ENCODE measurements at regions of chr11 and their contacts with region 1.

Region 1: GRCh38 chr11:107689317-107690202 is 22.3 kb downstream of the SLN start:
- DNase-seq: peak; percentile 33 to 65
- ATAC-seq: peak; percentile 64 to 85 (median 80)
- H3K4me3 ChIP-seq: no peak overlapping the region
- H3K27ac ChIP-seq: no peak overlapping the region
- H3K4me1 ChIP-seq: peaks cover 0 to 8% (median 0%) of the 10 kb centered on the region in 9 donors
- H3K27me3 ChIP-seq: peaks cover 0 to 28% (median 6%) of the 10 kb centered on the region in 7 donors
- CTCF ChIP-seq: peak; percentile 21 to 80 (median 65)

Region 2: DNA sequence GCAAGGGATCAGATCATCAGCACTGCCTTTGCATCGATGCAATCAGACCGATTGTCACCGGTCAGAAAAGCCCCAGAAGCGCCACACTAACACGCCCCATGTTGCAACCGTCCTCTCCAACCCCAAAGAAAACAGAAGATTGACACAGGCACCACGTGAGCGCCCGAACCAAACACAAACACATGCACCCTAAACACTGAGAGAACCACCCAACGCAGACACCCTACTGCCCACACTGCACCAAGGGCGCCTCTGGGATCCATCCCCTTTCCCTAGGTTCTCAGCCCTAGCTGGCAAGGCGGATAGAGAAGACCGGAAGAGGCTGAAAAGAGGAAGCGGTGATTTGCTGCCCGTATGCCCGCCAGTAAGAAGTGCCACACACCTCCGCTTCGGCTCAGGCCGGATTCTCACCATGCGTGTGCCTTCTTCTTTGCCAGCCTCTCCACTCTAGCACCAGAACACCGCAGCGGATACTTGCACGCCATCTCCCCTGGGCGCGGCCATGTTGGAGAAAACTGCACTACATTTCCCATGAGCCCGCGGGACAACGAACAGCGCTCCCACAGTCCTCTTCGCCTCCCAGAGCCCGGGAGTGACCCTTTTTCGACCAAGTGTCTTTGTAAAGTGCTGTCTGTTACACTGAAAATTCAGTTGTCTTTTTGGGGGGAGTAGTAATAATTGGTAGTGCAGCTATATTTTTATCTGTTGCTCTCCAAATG is 124.2 kb before region 1 on chr11 and contains the start of gene ALKBH8:
- intact Hi-C with region 1: loop called in 4 of 10 experiments (anchors 5 kb)
- DNase-seq: peak; percentile 72 to 81
- ATAC-seq: peak; percentile 96 to 98 (median 96)
- H3K4me3 ChIP-seq: peak within 1 kb of the TSS; percentile 60 to 98 (median 88)
- H3K27ac ChIP-seq: peak within 1 kb of the TSS in 9 of 10 donors; percentile 72 to 91 (median 80)
- H3K4me1 ChIP-seq: peaks cover 0 to 34% (median 25%) of the 10 kb centered on the region in 9 donors
- H3K27me3 ChIP-seq: peaks cover 0 to 13% (median 5%) of the 10 kb centered on the region in 7 donors
- CTCF ChIP-seq: no peak
- total RNA-seq, gene ALKBH8: 5.4 to 7.8 (median 6.8) TPM

Region 3: DNA sequence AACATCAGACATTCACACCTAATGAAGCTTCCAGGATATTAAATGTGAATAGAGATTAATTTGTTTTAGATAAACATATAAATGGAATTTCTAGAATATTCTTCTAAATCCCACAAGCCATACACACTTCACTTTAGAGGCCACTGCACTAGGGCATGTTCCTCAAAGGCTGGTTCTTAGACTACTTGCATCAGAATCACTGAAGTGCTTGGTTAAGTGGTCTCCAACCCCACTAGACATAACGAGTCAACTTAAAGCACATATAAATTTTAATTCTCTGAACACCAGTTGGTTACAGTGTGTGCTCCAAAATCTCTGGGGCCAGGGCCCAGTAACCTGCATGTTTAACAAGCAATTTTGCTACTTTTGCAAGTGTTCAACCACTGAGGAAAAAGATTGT is 116.1 kb before region 1 on chr11:
- intact Hi-C with region 1: loop called (anchors 1 to 5 kb)
- DNase-seq: no peak
- ATAC-seq: no peak
- H3K4me3 ChIP-seq: no peak overlapping the region
- H3K27ac ChIP-seq: no peak overlapping the region
- H3K4me1 ChIP-seq: no peaks in the 10 kb centered on the region
- H3K27me3 ChIP-seq: peaks cover 0 to 27% (median 7%) of the 10 kb centered on the region in 7 donors
- CTCF ChIP-seq: no peak

Region 4: DNA sequence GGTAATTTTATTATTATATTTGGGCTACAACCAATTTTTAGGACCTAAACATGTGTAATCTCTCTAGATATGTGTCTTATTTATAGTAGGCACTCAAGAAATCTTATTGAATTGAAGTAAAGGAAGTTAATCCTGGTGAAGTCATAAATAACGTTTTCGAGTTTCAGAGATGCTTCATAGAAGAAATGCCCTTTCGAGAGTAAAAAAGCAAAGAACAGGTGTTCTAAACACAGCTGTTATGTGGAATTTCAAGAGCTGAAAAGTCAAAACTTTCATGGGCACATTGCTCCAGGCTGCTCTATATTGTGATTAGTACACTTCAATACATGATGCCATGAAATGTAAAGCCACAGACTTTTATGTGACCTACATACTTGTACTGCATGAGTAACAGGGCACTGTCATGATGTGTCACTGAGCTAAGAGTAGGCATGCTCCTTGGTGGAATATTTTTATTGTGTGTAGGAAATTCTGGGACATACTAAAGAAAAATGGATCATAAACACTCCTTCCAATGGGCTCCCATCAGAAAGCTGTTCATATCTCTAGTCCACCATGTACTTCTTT is 105.8 kb before region 1 on chr11:
- intact Hi-C with region 1: loop called in 5 of 10 experiments (anchors 2 to 5 kb)
- DNase-seq: no peak
- ATAC-seq: no peak
- H3K4me3 ChIP-seq: no peak overlapping the region
- H3K27ac ChIP-seq: no peak overlapping the region
- H3K4me1 ChIP-seq: no peaks in the 10 kb centered on the region
- H3K27me3 ChIP-seq: peaks cover 0 to 47% (median 29%) of the 10 kb centered on the region in 7 donors
- CTCF ChIP-seq: no peak

Region 5: DNA sequence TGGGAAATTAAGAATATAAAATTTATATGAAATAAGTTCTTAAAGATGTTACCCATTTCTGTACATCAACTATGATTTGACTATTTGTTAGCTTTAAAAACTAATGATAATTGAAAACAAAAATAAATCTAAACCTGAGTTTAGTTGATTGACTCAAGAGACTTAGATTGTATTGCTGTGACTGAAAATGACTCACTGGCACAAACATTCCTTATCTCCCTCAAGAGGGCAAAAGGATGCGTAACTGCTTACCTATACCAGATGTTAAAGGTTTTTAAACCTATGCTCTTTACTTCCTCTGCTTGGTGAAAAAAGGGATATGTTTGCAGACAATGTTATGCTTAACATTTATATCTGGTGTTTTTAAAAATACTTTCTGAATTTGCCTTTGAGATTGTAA is 563.6 kb after region 1 on chr11:
- intact Hi-C with region 1: no loop called
- DNase-seq: no peak
- ATAC-seq: no peak
- H3K4me3 ChIP-seq: no peak overlapping the region
- H3K27ac ChIP-seq: no peak overlapping the region
- H3K4me1 ChIP-seq: no peaks in the 10 kb centered on the region
- H3K27me3 ChIP-seq: no peaks in the 10 kb centered on the region
- CTCF ChIP-seq: no peak